Calu3 (cell line): ENCODE measurements at regions of chr5 and their contacts with region 1.

Region 1: GRCh38 chr5:84343171-84343570 is 41.5 kb downstream of the EDIL3 start:
- DNase-seq: no peak
- H3K4me3 Mint-ChIP-seq: no peak overlapping the region
- H3K27ac Mint-ChIP-seq: no peak overlapping the region
- H3K4me1 Mint-ChIP-seq: no peaks in the 10 kb centered on the region
- H3K27me3 Mint-ChIP-seq: no peaks in the 10 kb centered on the region
- CTCF ChIP-seq: no peak

Region 2: GRCh38 chr5:84281383-84281782 is 61.8 kb before region 1 on chr5:
- CTCF ChIA-PET with region 1: interaction called, 10 read pairs
- intact Hi-C with region 1: no loop called
- DNase-seq: no peak
- H3K4me3 Mint-ChIP-seq: no peak overlapping the region
- H3K27ac Mint-ChIP-seq: no peak overlapping the region
- H3K4me1 Mint-ChIP-seq: no peaks in the 10 kb centered on the region
- H3K27me3 Mint-ChIP-seq: no peaks in the 10 kb centered on the region
- CTCF ChIP-seq: no peak